ENCODE measurements at regions of chr18 and their contacts with region 1.

Region 1: DNA sequence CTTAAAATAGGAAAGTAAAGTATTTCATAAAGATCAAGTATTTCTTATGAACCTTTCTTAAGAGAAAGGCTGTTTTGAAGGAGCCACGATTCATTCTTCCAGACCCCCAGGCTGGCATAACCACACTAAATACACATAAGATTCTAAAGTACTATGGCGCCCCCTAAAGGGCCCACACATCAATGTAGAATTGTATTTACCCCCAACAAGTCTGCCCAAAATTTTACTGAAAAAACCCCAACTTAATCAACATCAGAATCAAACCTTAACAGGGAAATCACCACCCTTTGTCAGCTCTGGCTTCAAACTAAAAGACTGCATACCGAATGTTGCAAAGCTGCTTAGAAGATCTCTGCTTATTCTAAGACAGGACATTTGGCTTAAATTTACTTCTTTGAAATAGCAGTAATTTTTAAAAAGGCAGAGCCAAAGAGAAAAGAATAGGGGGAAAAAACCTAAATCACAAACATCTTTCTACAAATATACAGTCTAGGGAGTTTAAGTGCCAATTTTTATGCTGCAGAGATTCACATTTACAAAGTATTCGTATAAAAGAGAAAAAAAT is 20.4 kb upstream of the BCL2 start:
- DNase-seq: peak in 1 of 4 donors; percentile 9
- ATAC-seq: no peak
- H3K4me3 ChIP-seq: no peak overlapping the region
- H3K27ac ChIP-seq: no peak overlapping the region
- H3K4me1 ChIP-seq: no peaks in the 10 kb centered on the region
- H3K27me3 ChIP-seq: no peaks in the 10 kb centered on the region
- CTCF ChIP-seq: peak; percentile 36 to 41

Region 2: DNA sequence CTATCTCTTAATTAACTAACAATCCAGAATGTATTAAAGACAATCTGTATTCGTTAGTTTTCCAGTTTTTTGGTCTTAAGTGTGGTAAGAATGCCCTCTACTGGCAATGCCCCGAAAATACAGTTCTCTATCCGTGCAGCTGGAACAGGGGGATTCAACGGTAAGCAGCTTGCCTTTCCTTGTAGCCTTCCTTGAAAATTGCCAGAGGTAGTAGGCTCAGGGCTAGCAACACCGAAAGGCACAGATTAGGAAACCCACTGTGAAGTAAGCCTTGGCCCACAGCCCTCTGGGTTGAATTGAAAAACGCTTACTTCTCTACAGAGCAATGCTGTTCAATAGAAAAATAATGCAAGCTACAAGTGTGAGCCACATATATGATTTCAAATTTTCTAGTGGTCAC is 99.3 kb after region 1 on chr18:
- intact Hi-C with region 1: loop called in 1 of 2 experiments (anchors 10 kb)
- DNase-seq: peak in 2 of 4 donors; percentile 49 to 63
- ATAC-seq: peak; percentile 91
- H3K4me3 ChIP-seq: no peak overlapping the region
- H3K27ac ChIP-seq: no peak overlapping the region
- H3K4me1 ChIP-seq: peaks cover 0 to 10% of the 10 kb centered on the region in 2 donors
- H3K27me3 ChIP-seq: peaks cover 0 to 5% of the 10 kb centered on the region in 2 donors
- CTCF ChIP-seq: peak; percentile 67 to 70